ENCODE measurements at regions of chr1 and their contacts with region 1.

Region 1: GRCh38 chr1:24830680-24831272 is 85.5 kb downstream of the CLIC4 start:
- DNase-seq: peak; percentile 45
- CTCF ChIP-seq: peak; percentile 68

Region 2: GRCh38 chr1:24635195-24635843 is 195.5 kb before region 1 on chr1:
- in situ Hi-C with region 1: no loop called
- DNase-seq: peak; percentile 76
- CTCF ChIP-seq: peak; percentile 61

Region 3: GRCh38 chr1:24683713-24684162 is 147.0 kb before region 1 on chr1:
- in situ Hi-C with region 1: loop called (anchors 5 kb)
- DNase-seq: no peak
- CTCF ChIP-seq: no peak

Region 4: DNA sequence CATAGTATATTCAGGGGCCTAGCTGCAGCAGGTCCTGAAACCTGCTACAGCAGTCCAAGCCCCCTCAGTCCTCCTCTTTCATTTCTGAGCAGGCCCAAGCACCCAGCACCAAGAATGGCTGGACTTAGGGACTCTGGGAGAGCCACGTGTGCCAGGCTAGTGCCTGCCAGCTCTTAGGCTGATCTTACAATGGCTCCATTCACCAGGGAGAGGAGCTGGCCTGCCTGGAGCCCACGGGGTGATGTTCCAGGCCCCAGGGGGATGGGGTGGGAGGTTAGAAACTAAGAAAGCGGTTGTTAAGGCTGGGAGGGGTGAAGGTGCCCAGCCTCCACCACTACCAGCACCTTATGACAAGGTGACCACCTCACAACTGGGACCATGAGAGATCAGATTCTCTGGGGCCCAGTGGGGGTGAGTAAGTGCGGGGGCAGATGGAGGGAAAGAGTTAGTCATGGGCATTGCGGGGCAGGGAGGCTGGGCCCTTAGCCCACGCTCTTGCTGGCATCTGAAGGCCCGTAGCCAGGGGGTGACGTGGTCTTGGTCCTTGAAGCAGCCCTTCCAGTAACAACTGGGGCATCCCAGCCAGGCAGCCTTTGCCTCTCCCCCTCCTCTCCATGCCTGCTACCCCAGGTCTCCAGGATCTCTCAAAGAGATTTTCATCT is 115.8 kb before region 1 on chr1:
- in situ Hi-C with region 1: no loop called
- DNase-seq: peak; percentile 3
- CTCF ChIP-seq: no peak

Region 5: GRCh38 chr1:25080294-25081209 is 249.8 kb after region 1 on chr1:
- in situ Hi-C with region 1: no loop called
- DNase-seq: no peak
- CTCF ChIP-seq: no peak